OCI-LY7 (cell line): ENCODE measurements at regions of chr18 and their contacts with region 1.

Region 1: DNA sequence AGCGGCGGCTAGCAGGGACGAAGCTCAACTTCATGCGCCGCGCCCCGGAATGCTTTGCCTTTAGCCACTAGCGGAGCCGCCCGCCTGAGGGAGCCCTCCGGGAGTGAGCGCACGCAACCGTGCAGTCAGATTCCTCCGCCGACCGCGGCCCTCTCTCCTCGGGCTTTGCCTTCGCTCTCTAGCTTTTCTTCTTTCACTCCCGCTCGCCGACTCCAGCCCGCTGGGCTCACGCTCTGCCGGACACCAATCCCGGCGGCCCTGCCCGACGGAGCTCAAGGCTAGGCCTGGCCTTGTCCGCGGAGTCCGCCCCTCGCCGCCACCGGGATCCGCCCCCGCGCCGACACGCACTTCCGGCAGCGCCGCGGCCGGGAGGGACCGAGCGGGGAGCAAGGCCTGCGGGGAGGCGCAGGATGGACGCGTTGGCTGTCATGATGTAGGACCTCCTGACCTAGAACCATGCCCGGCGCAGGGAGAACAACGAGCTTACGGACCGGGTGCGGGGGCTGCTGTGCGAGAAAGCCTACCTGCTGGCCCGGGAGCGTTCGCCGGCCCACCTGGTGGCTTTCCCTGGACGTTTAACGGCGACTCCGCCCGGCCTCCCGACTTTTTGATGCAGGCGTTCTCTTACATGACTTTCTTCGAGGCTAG is 40.8 kb upstream of the AKAIN1 start:
- DNase-seq: peak; percentile 89
- H3K4me3 ChIP-seq: peak overlapping the region; percentile 93
- H3K27ac ChIP-seq: peak overlapping the region; percentile 78
- H3K4me1 ChIP-seq: peaks cover 49% of the 10 kb centered on the region
- CTCF ChIP-seq: peak; percentile 40; the same call in 1 of the 2 replicates

Region 2: GRCh38 chr18:5073026-5073944 is 164.6 kb before region 1 on chr18:
- CTCF ChIA-PET with region 1: no interaction called
- POLR2A ChIA-PET with region 1: no interaction called
- intact Hi-C with region 1: loop called (anchors 5 kb)
- DNase-seq: peak; percentile 50
- H3K4me3 ChIP-seq: no peak overlapping the region
- H3K27ac ChIP-seq: no peak overlapping the region
- H3K4me1 ChIP-seq: peaks cover 10% of the 10 kb centered on the region
- CTCF ChIP-seq: peak; percentile 83

Region 3: DNA sequence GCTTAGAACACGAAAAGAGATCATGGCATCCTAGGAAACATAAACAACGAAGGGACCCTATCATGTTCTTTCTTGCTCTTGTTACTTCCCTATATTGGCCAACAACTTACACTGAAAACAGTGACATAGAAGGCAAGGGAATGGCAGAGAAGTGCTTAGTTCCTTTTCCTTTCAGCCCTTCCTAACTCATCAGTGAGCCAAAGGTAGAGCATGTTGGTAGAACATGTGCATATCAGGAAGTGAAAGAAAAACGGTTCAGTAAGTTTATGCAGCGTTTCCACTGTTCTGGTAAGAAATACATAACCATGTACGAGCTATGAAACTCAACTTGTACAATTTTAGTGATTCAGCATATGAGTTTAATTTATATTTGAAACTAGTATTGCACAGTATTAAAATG is 62.5 kb before region 1 on chr18:
- CTCF ChIA-PET with region 1: no interaction called
- POLR2A ChIA-PET with region 1: interaction called, 3 read pairs
- intact Hi-C with region 1: loop called (anchors 1 kb)
- DNase-seq: peak; percentile 75
- H3K4me3 ChIP-seq: peak overlapping the region; percentile 0
- H3K27ac ChIP-seq: peak overlapping the region; percentile 35
- H3K4me1 ChIP-seq: peaks cover 15% of the 10 kb centered on the region
- CTCF ChIP-seq: no peak

Region 4: GRCh38 chr18:5250603-5251002 is 12.8 kb after region 1 on chr18:
- CTCF ChIA-PET with region 1: no interaction called
- POLR2A ChIA-PET with region 1: interaction called, 11 read pairs
- intact Hi-C with region 1: no loop called
- DNase-seq: no peak
- H3K4me3 ChIP-seq: no peak overlapping the region
- H3K27ac ChIP-seq: no peak overlapping the region
- H3K4me1 ChIP-seq: no peaks in the 10 kb centered on the region
- CTCF ChIP-seq: no peak

Region 5: GRCh38 chr18:5288517-5288935 is 50.7 kb after region 1 on chr18:
- CTCF ChIA-PET with region 1: no interaction called
- POLR2A ChIA-PET with region 1: interaction called, 56 read pairs
- intact Hi-C with region 1: loop called (anchors 1 kb)
- DNase-seq: peak; percentile 88
- H3K4me3 ChIP-seq: peak overlapping the region; percentile 52
- H3K27ac ChIP-seq: peak overlapping the region; percentile 89
- H3K4me1 ChIP-seq: peaks cover 93% of the 10 kb centered on the region
- CTCF ChIP-seq: no peak

Region 6: GRCh38 chr18:5295981-5296705 is 58.3 kb after region 1 on chr18:
- CTCF ChIA-PET with region 1: interaction called, 8 read pairs
- POLR2A ChIA-PET with region 1: interaction called, 56 read pairs
- intact Hi-C with region 1: loop called (anchors 1 kb)
- DNase-seq: peak; percentile 97
- H3K4me3 ChIP-seq: peak overlapping the region; percentile 86
- H3K27ac ChIP-seq: peak overlapping the region; percentile 92
- H3K4me1 ChIP-seq: peaks cover 43% of the 10 kb centered on the region
- CTCF ChIP-seq: no peak

Region 7: DNA sequence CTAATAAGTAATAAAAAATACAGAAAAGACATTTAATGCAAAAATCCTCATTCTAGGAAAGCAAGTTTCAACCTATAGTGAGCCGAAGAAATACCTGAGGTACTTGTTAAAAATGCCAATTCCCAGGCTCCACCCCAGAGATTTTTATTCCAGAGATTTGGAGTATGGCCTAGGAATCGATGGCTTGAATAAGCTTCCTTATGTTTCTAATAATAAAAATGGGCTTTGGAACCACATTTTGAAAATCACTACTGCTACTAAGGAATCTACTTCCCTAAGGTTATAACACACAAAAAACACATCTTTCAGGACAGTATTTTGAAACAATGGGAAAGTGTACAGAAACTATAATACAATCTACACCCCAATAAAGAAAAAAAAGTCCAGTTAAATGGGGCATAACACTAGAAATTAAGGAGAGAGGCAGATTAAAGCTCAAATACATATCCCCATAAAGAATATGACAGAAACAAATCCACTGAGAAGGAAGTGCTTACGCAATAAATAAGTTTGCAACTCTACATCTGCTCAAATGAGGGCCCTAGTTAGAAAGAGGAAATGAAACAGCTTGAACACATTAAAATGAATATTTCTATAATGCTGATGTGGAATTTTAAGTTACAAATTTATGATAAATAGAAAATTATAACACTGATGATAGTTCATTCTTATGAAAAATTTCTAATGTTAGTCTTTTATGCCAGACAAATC is 202.3 kb after region 1 on chr18:
- CTCF ChIA-PET with region 1: no interaction called
- POLR2A ChIA-PET with region 1: no interaction called
- intact Hi-C with region 1: loop called (anchors 10 kb)
- DNase-seq: peak; percentile 39
- H3K4me3 ChIP-seq: no peak overlapping the region
- H3K27ac ChIP-seq: no peak overlapping the region
- H3K4me1 ChIP-seq: peaks cover 21% of the 10 kb centered on the region
- CTCF ChIP-seq: no peak

Region 8: DNA sequence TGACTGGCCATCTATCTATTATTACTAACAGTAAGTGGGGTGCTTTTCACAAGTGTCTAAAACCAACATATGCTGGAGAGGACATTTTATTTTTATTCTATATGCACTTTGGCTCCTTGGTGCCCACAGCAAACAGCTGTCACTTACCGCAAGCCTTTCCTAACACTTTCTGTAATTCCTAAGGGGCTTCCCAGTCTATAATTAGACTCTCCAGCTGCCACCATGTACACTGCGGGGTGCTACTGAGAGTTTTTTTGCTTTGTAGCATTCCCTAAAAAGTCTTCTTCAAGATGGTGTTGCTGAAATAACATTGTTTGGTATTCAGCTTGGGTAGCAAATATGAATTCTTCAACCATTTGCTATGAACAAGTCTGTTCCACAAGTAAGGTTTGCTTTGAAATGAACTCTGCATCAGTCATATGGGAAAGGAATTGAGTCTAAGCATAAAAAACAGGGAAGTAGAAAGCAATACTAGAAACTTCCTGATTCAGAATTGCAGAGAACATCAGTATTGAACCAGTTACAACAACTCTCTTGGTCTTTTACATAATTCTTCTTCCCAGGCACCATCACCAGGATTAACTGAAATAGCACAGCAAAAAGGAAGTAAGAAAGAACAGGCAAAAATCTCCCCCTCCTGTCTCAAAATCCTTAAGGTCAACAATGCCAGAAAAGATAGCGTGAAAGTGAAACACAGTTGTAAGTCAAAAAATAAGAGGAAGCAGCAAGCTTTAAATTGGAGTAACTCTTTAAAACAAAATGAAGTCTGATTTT is 277.4 kb after region 1 on chr18:
- CTCF ChIA-PET with region 1: no interaction called
- POLR2A ChIA-PET with region 1: no interaction called
- intact Hi-C with region 1: no loop called
- DNase-seq: no peak
- H3K4me3 ChIP-seq: no peak overlapping the region
- H3K27ac ChIP-seq: no peak overlapping the region
- H3K4me1 ChIP-seq: no peaks in the 10 kb centered on the region
- CTCF ChIP-seq: no peak

Region 9: GRCh38 chr18:5571666-5572065 is 333.8 kb after region 1 on chr18:
- CTCF ChIA-PET with region 1: no interaction called
- POLR2A ChIA-PET with region 1: no interaction called
- intact Hi-C with region 1: no loop called
- DNase-seq: no peak
- H3K4me3 ChIP-seq: no peak overlapping the region
- H3K27ac ChIP-seq: no peak overlapping the region
- H3K4me1 ChIP-seq: no peaks in the 10 kb centered on the region
- CTCF ChIP-seq: no peak